ENCODE measurements at regions of chr20 and their contacts with region 1.

Region 1: GRCh38 chr20:45373353-45374100 is 4.6 kb downstream of the TP53TG5 start:
- DNase-seq: peak; percentile 93
- H3K27ac ChIP-seq: peak overlapping the region; percentile 51
- CTCF ChIP-seq: peak; percentile 98

Region 2: GRCh38 chr20:45235995-45236394 is 137.5 kb before region 1 on chr20:
- CTCF ChIA-PET with region 1: no interaction called
- POLR2A ChIA-PET with region 1: no interaction called
- DNase-seq: no peak
- H3K27ac ChIP-seq: no peak overlapping the region
- CTCF ChIP-seq: peak; percentile 53; the same call in 1 of the 2 replicates

Region 3: GRCh38 chr20:45406259-45407066 is 32.9 kb after region 1 on chr20:
- CTCF ChIA-PET with region 1: interaction called, 13 read pairs
- POLR2A ChIA-PET with region 1: no interaction called
- DNase-seq: peak; percentile 77
- H3K27ac ChIP-seq: peak overlapping the region; percentile 74
- CTCF ChIP-seq: no peak

Measured in RWPE1 (cell line).